GM13977 (cell line): ENCODE measurements at regions of chr9 and their contacts with region 1.

Region 1: DNA sequence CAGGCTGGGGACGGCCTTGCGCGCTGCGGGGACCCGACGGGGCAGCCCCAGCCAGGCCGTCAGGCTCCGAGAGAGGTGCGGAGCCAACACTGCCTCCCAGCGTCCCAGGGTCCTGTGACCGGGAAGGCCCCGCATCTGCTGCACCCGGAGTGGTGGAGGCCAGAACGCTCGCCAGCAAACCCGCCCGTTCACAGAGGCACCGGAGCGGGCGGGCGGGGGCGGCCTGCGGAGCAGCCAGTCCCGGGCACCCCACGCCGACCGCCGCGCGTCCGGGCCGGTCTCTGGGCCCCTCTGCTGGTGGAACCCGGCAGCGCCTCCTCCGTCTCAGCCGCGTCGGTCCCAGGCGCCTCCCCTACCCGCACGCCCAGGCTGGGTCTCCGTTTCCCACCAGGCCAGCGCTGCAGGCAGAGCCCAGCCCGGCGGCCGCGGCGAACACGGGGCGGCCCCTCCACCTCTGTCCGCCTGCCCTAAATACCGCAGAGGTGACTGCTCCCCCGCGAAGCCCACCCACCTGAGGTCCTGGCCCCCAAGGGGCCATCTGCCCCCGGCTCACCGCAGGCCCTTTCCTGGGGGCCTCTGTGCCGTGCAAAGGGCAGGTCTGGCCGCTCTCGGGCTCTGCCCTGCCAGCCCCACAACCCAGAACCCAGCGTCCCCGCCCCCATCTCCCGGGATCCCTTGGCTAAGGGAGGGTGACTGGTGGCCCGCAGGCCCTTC is 15.9 kb downstream of the EXD3 start:
- DNase-seq: peak; percentile 91
- CTCF ChIP-seq: peak; percentile 91

Region 2: GRCh38 chr9:136902259-136902821 is 504.7 kb before region 1 on chr9:
- in situ Hi-C with region 1: no loop called
- DNase-seq: peak; percentile 93
- CTCF ChIP-seq: no peak

Region 3: GRCh38 chr9:137295238-137295811 is 111.7 kb before region 1 on chr9:
- in situ Hi-C with region 1: loop called (anchors 10 kb)
- DNase-seq: peak; percentile 96
- CTCF ChIP-seq: peak; percentile 98

Region 4: DNA sequence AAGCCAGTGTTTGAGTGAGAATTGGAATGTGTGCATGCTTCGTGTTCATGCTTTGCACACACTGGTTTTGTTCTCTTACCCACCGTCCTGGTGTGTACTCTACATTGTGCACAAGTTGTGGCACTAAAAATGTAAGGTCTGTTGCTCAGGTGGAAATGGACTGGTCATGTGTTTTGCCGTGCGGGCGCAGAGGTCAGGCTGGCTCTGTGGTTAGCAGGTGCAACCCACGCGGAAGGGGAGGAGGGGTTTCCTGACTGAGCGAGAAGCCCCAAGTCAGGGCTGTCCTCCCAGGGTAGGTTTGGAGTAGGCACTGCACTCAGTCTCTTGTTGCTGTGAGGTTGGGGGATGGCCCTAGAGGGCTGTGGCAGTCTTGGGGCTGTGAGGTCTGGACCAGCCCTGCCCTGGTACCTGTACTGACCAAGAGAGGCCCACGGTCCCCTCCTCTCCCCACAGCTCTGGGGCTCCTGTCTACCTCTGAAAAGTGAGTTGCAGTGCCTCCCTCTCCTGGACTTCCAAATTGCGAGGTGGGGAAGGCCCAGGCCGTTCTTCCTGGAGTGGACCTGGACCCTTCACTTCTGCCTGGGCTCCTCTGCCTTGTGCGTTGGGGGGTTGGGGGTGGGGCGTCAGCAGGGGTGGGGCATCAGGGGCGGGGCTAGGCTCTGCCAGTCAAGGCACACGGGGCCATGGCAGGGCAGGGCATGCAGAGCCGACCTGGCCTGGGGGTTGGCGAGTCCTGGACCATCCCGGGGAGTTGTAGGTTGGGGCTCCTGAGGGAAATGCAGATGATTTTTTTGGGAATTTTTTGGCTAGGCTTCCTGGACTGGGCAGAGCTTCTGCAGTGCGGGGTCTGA is 298.6 kb after region 1 on chr9:
- in situ Hi-C with region 1: no loop called
- DNase-seq: peak; percentile 81
- CTCF ChIP-seq: no peak